Right lobe of liver (tissue), 6 donors: ENCODE measurements at regions of chr6 and their contacts with region 1.

Region 1: DNA sequence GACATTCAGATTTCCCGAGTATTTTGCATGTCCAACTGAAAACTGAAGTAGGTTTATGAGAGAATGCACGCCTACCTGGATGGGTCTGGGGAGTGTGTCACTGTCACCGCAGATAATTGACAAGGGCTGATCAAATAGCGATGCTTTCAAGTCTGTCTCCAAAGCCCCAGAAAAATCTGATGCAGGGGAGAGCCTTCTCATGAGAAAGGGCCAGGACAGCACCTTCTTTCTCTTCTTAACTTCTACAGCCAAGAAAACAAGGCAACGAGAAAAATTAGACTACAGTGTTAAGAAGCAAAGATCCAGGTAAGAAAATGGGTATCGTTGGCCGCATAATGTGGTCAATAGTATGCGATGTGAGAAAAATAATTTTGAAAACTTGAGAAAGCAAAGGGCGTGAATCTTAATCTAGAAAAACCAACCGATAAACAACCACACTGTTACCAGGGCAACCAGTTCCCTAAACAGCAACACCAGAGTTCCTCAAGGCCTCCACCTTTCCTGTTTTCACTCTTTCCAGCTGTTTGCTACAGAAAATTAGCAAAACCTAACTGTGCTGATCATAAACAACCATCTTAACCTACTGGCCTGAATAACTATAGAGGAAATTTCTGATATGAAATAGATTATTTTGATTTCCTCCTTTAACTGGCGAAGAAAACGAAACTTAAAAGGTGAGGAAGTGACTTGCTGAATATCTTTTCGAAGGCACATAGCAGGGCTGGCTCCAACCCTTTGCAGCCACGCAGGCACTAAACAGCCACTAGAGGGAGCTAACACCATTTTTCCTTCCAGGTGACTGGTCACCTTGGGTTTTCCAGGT is 2.6 kb downstream of the TAGAP start:
- DNase-seq: peak; percentile 55 to 73 (median 72)
- ATAC-seq: peak; percentile 90 to 96 (median 92)
- H3K4me3 ChIP-seq: peak overlapping the region in 1 of 3 donors; percentile 28
- H3K27ac ChIP-seq: peak overlapping the region; percentile 16 to 40 (median 21)
- H3K4me1 ChIP-seq: peaks cover 0 to 13% (median 2%) of the 10 kb centered on the region in 4 donors
- H3K27me3 ChIP-seq: no peaks in the 10 kb centered on the region
- CTCF ChIP-seq: peak; percentile 86 to 99 (median 99)
- POLR2A ChIP-seq: no peak

Region 2: DNA sequence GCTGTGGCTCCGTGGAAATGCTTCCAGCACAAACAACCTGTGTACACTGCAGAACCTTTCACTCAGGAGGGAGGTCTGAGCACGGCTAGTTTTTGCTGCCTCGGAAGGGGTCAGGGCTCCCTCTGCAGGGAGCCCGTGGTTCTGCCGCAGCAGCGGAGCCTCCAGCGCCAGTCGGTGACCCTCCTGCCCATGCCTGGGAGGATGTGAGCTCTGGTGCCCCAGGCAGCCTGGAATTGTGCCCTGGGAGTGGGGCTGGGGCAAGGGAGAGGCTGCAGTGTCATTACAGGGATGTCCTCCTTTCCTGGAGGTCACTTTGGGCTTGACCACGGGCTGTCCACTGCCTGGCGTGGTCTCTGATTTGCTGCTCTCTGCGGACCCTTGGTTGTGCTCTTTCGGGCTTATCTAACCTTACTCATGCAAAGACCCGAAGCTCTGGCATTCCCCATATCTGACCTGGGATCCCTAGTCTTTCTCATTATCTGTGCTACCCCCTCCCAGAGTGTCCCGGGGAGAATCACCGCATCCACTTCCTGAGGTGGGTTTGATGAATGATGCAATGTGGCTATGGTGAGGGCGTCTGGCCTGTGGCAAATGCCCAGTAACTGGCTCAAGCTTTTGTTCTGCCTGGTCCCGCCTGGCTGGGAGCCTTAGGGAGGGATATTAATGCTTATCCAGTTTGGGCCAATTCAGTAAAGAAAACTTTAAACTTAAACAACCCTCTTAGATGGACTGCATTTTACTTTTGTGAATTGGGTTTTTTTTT is 62.1 kb after region 1 on chr6:
- intact Hi-C with region 1: loop called in 1 of 2 experiments (anchors 5 kb)
- DNase-seq: peak; percentile 65 to 84 (median 75)
- ATAC-seq: peak; percentile 93 to 96 (median 95)
- H3K4me3 ChIP-seq: no peak overlapping the region
- H3K27ac ChIP-seq: no peak overlapping the region
- H3K4me1 ChIP-seq: no peaks in the 10 kb centered on the region
- H3K27me3 ChIP-seq: no peaks in the 10 kb centered on the region
- CTCF ChIP-seq: peak; percentile 77 to 89 (median 82)
- POLR2A ChIP-seq: no peak

Region 3: GRCh38 chr6:159134701-159135364 is 92.6 kb after region 1 on chr6:
- intact Hi-C with region 1: loop called in 1 of 2 experiments (anchors 10 kb)
- DNase-seq: peak in 1 of 3 donors; percentile 65
- ATAC-seq: peak; percentile 93 to 98 (median 96)
- H3K4me3 ChIP-seq: no peak overlapping the region
- H3K27ac ChIP-seq: no peak overlapping the region
- H3K4me1 ChIP-seq: no peaks in the 10 kb centered on the region
- H3K27me3 ChIP-seq: no peaks in the 10 kb centered on the region
- CTCF ChIP-seq: peak; percentile 81 to 94 (median 94)
- POLR2A ChIP-seq: no peak